Heart right ventricle (tissue), 16 donors: ENCODE measurements at regions of chr7 and their contacts with region 1.

Region 1: DNA sequence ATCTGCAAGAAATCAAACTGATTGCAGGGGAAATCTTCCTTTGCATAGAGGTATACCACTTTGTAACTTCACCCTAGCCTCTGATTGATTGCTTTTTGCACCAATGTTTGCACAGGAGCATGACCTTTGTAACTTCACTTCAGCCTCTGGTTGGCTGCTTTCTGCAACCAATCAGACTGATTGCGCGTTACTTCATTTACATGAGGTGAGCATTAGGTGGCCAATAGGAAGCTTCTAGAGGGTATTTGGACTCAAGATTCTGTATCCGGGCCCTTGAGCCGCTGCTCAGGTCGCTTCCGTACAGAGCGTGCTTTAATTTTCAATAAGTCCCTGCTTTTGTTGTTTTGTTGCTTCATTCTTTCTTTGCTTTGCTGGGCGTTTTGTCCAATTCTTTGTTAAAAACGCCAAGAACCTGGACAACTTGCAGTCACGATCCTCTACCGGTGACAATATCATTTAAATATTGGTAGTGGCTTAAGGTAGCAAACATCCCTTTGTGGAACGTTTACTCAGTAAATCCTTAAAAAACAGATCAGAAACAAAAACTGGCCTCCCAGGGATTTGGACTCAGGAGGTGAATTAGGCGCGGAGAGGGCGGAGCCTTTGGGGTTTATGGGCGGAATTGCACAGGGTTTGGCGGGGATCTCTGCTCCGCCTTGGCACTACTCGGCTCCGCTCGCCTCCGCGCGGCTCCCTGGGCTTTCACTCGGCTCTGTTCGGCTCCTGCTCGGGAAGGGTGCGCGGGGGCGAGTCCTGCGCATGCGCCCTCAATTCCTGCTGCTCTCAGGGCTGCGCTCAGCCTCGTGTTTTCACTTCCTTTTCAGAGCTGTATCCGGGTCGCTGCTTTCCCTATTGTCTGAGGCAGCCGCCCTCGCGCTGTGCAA is at the start of gene PHF14:
- DNase-seq: peak; percentile 97
- ATAC-seq: peak; percentile 99 to 100 (median 100)
- H3K4me3 ChIP-seq: peak within 1 kb of the TSS; percentile 62 to 88 (median 84)
- H3K27ac ChIP-seq: peak within 1 kb of the TSS; percentile 6 to 93 (median 84)
- H3K4me1 ChIP-seq: peaks cover 0 to 22% (median 17%) of the 10 kb centered on the region in 9 donors
- H3K27me3 ChIP-seq: peaks cover 0 to 7% (median 3%) of the 10 kb centered on the region in 7 donors
- CTCF ChIP-seq: no peak
- total RNA-seq, gene PHF14: 14.1 to 16.8 (median 14.8) TPM

Region 2: DNA sequence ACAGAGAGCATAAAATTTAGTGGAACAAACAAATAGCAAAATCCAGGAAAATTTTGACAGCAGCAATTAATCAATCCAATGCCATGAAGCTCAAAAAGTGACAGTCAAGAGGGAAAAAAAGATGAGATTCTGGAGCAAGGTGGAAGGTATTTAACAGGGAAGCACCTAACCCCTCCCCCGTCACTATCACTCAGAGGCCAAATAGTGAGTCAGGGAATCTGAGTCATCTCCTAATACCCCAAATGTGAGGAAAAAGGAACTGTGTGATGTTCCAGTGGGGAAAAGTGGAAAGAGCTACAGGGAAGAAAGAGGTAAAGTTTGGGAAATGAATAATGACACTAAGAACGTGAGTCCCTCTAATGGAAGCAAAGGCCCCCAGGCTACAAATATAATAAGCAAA is 112.8 kb before region 1 on chr7:
- intact Hi-C with region 1: no loop called
- DNase-seq: no peak
- ATAC-seq: no peak
- H3K4me3 ChIP-seq: no peak overlapping the region
- H3K27ac ChIP-seq: no peak overlapping the region
- H3K4me1 ChIP-seq: no peaks in the 10 kb centered on the region
- H3K27me3 ChIP-seq: no peaks in the 10 kb centered on the region
- CTCF ChIP-seq: no peak

Region 3: DNA sequence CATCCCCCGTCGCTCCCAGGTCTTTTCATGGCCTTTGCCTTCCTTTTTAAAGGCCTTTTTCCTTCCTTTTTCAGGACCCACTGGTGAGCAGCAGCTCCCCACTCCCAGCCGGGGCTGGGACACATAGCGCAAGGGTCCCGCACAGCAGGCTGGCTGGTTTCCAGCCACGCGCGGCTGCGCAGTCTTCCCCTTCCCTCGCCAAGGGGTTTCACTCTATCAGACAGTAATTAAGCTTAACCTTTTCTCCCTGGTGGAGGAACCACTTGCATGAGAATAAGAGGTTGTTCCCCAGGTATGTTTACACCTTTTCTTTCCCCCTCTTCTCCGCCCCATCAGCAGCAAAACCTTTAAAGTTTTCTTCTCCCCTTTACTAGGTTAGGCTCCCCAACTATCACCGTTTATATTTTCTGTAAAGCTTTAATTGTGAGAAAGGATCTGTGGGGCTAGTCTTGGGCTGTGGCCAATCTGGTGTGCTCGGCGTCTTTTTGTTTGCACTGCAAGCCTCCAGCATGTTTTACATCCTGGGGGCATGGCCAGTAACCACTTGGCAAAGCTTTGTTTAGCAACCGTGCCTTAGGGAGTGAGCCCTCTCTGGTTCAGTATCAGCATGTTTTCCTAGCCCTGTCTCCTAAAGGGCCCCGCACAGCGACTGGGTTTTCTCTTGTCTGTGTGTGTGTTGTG is 220.0 kb after region 1 on chr7:
- intact Hi-C with region 1: loop called in 1 of 10 experiments (anchors 10 kb)
- DNase-seq: peak in 1 of 2 donors; percentile 29
- ATAC-seq: peak in 4 of 8 donors; percentile 41 to 68 (median 66)
- H3K4me3 ChIP-seq: peak overlapping the region in 9 of 10 donors; percentile 24 to 56 (median 44)
- H3K27ac ChIP-seq: peak overlapping the region in 4 of 10 donors; percentile 15 to 68 (median 49)
- H3K4me1 ChIP-seq: peaks cover 0 to 18% (median 2%) of the 10 kb centered on the region in 9 donors
- H3K27me3 ChIP-seq: peaks cover 0 to 3% (median 0%) of the 10 kb centered on the region in 7 donors
- CTCF ChIP-seq: no peak